Heart right ventricle (tissue), 16 donors: ENCODE measurements at regions of chr1 and their contacts with region 1.

Region 1: DNA sequence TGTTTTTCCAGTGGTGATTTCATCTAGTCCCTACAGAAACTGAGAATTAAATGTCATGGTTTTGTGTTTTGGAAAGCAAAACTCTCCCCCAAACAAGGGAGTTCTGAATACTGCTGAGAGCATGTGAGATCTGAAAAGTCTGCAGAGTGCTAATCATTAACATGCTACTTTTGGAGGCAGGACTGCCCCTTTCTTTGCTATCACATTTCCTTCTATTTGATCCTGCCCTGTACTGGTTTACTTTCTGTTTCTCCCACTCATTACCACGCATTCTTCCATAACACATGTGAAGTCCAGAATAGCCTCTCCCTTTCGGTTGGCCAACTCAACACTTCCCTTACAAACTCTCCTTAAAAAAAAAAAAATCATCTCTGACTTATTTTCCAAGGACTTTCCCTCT is 63.6 kb downstream of the GADD45A start:
- DNase-seq: no peak
- ATAC-seq: peak; percentile 55 to 81 (median 78)
- H3K4me3 ChIP-seq: peak overlapping the region in 6 of 10 donors; percentile 5 to 31 (median 14)
- H3K27ac ChIP-seq: peak overlapping the region; percentile 38 to 76 (median 64)
- H3K4me1 ChIP-seq: peaks cover 5 to 68% (median 50%) of the 10 kb centered on the region in 9 donors
- H3K27me3 ChIP-seq: no peaks in the 10 kb centered on the region
- CTCF ChIP-seq: no peak

Region 2: GRCh38 chr1:67540733-67541125 is 207.9 kb before region 1 on chr1:
- intact Hi-C with region 1: loop called in 1 of 10 experiments (anchors 5 kb)
- DNase-seq: no peak
- ATAC-seq: no peak
- H3K4me3 ChIP-seq: no peak overlapping the region
- H3K27ac ChIP-seq: no peak overlapping the region
- H3K4me1 ChIP-seq: peaks cover 0 to 14% (median 9%) of the 10 kb centered on the region in 9 donors
- H3K27me3 ChIP-seq: no peaks in the 10 kb centered on the region
- CTCF ChIP-seq: no peak

Region 3: GRCh38 chr1:67561704-67562113 is 186.9 kb before region 1 on chr1:
- intact Hi-C with region 1: loop called in 3 of 10 experiments (anchors 5 to 10 kb)
- DNase-seq: peak; percentile 92 to 93
- ATAC-seq: peak; percentile 69 to 91 (median 78)
- H3K4me3 ChIP-seq: no peak overlapping the region
- H3K27ac ChIP-seq: peak overlapping the region in 9 of 10 donors; percentile 10 to 64 (median 54)
- H3K4me1 ChIP-seq: peaks cover 0 to 42% (median 29%) of the 10 kb centered on the region in 9 donors
- H3K27me3 ChIP-seq: no peaks in the 10 kb centered on the region
- CTCF ChIP-seq: peak; percentile 76 to 92 (median 88)

Region 4: GRCh38 chr1:67664048-67664447 is 84.6 kb before region 1 on chr1:
- intact Hi-C with region 1: no loop called
- DNase-seq: no peak
- ATAC-seq: no peak
- H3K4me3 ChIP-seq: no peak overlapping the region
- H3K27ac ChIP-seq: no peak overlapping the region
- H3K4me1 ChIP-seq: peaks cover 0 to 4% (median 0%) of the 10 kb centered on the region in 9 donors
- H3K27me3 ChIP-seq: no peaks in the 10 kb centered on the region
- CTCF ChIP-seq: no peak

Region 5: DNA sequence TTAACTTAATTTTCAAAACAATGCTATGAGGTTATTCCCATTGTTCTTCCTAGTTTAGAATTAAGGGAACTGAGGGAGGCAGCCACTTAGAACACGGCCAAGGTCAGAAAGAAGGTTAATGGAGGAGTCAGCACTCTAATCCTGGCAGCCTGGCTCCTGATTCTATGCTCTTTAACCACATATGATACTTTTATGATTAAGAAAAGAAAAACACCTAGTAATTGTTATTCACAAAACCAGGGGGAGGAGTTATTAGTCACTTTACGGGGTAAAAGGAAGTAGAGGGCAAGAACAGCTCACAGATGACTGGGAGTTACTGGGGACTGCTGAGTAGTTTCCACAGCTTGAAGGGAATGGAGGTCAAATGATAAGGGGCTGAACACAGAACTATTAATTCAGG is 25.0 kb before region 1 on chr1:
- intact Hi-C with region 1: no loop called
- DNase-seq: peak in 1 of 2 donors; percentile 37
- ATAC-seq: peak; percentile 55 to 81 (median 80)
- H3K4me3 ChIP-seq: no peak overlapping the region
- H3K27ac ChIP-seq: peak overlapping the region in 9 of 10 donors; percentile 44 to 84 (median 71)
- H3K4me1 ChIP-seq: peaks cover 9 to 65% (median 43%) of the 10 kb centered on the region in 9 donors
- H3K27me3 ChIP-seq: no peaks in the 10 kb centered on the region
- CTCF ChIP-seq: no peak

Region 6: DNA sequence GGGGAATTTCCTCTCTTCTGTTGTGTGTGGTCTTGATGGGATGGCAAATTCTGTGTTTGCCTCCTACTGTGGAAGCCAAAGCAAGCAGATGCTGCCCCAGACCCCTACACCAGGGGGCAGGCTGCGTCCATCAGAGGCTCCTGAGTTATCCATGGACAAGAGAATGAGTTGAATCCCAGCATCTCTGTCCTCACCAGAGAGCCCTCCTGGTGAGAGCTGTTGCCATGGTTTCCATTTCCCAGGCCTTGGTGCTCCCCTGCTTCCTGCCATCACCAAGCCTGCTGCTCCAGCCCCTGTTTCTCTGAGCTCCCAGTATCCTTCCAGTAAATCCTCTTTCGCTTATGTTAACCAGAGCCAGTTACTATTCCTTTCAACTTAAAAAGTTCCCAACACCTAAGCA is 105.1 kb after region 1 on chr1:
- intact Hi-C with region 1: no loop called
- DNase-seq: peak; percentile 54 to 59
- ATAC-seq: peak; percentile 58 to 86 (median 74)
- H3K4me3 ChIP-seq: no peak overlapping the region
- H3K27ac ChIP-seq: no peak overlapping the region
- H3K4me1 ChIP-seq: peaks cover 0 to 12% (median 9%) of the 10 kb centered on the region in 9 donors
- H3K27me3 ChIP-seq: no peaks in the 10 kb centered on the region
- CTCF ChIP-seq: peak; percentile 57 to 83 (median 76)